Ovary (tissue), 10 donors: ENCODE measurements at regions of chr1 and their contacts with region 1.

Region 1: DNA sequence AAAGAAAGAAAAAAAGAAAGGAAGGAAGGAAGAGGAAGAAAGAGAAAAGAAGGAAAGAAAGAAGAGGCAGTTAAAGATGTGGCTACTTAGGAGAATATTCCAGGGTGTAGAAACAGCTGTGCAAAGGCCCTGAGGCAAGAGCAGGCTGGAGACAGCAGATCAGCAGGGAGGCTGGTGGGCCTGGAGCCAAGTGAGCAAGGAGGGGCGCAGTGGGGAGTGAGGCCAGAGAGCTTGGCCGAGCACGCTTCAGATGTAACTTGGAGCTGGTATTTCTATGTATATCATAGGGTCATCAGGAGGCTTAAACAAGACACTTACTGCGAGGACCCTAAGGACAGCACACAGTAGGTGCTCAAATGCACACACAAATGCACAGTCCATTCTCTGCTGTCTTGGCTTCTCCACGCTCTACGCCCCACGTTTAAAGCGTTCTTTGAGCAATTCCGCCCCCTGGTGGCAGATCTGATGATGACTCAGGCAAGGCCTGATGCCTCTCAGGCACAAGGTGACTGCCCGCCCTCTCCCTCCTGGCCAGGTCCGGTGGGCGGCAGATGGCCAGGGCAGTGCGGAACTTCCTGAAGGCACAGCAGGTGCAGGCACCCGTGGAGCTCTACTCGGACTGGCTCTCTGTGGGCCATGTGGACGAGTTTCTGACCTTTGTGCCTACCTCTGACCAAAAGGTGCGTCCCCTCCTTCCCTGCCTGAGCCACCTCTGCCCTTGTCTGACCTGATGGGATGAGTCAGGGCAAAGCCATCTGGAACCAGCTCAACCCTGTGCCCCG is 11.9 kb upstream of the PADI3 start:
- DNase-seq: peak; percentile 75 to 90 (median 86)
- H3K4me3 ChIP-seq: no peak overlapping the region
- H3K27ac ChIP-seq: no peak overlapping the region
- H3K4me1 ChIP-seq: no peaks in the 10 kb centered on the region
- H3K27me3 ChIP-seq: no peaks in the 10 kb centered on the region
- CTCF ChIP-seq: peak; percentile 76 to 80 (median 78)
- EP300 ChIP-seq: no peak
- POLR2A ChIP-seq: no peak

Region 2: DNA sequence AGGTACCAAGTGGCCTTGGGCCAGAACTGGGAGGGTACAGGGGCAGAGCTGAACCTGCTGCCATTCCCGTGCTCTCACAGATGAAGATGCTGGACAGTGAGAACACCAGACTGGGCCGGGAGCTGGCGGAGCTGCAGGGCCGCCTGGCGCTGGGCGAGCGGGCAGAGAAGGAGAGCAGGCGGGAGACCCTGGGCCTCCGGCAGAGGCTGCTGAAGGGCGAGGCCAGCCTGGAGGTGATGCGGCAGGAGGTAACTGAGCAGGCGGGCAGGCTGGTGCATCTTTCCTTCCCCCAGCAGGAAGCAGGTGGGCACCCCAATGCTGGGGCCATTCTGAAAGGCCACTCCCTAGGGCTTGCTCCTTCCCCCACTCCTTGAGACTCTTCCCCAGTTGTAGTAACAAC is 278.5 kb before region 1 on chr1:
- intact Hi-C with region 1: loop called in 1 of 4 experiments (anchors 10 kb)
- DNase-seq: no peak
- H3K4me3 ChIP-seq: no peak overlapping the region
- H3K27ac ChIP-seq: no peak overlapping the region
- H3K4me1 ChIP-seq: peaks cover 2% of the 10 kb centered on the region
- H3K27me3 ChIP-seq: no peaks in the 10 kb centered on the region
- CTCF ChIP-seq: no peak
- EP300 ChIP-seq: no peak
- POLR2A ChIP-seq: no peak

Region 3: DNA sequence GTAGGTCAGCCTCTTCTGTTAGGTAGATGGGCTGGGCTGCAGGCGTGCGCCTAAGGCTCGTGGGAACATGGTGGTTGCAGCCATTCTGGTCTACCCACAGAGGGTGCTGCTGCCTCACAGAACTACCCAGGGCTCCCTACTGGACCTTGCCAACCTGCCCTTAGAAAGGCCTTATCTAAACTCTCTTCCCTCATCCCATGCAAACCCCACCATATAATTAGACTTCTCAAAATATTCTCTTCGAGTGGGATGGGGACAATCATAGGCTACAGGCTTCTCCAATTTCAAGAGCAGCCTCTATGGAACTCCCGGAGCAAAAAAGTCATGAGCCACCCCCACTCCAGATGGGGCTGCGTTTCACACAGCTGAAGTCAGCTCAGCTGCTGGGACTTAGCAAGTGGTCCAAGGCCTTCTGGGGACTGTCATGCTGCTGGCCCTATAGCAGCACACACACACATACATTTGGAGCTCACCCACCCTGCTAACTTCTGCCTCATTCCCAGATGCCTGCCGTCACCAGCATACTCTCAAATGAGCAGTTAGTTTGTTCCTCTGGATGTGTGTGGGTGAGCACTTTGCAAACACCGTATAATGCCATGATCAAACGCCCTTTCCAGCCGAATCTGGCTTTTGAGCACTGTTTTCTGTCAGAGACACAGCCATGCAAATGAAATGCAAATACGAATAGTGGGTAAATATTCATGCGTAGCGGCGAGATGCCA is 177.1 kb before region 1 on chr1:
- intact Hi-C with region 1: loop called (anchors 5 to 10 kb)
- DNase-seq: peak; percentile 52 to 68 (median 59)
- H3K4me3 ChIP-seq: no peak overlapping the region
- H3K27ac ChIP-seq: no peak overlapping the region
- H3K4me1 ChIP-seq: no peaks in the 10 kb centered on the region
- H3K27me3 ChIP-seq: no peaks in the 10 kb centered on the region
- CTCF ChIP-seq: peak; percentile 29 to 47 (median 35)
- EP300 ChIP-seq: no peak
- POLR2A ChIP-seq: no peak

Region 4: GRCh38 chr1:17125756-17126237 is 111.2 kb before region 1 on chr1:
- intact Hi-C with region 1: loop called (anchors 2 to 10 kb)
- DNase-seq: peak; percentile 78 to 93 (median 89)
- H3K4me3 ChIP-seq: no peak overlapping the region
- H3K27ac ChIP-seq: no peak overlapping the region
- H3K4me1 ChIP-seq: no peaks in the 10 kb centered on the region
- H3K27me3 ChIP-seq: no peaks in the 10 kb centered on the region
- CTCF ChIP-seq: peak; percentile 68 to 93 (median 76)
- EP300 ChIP-seq: no peak
- POLR2A ChIP-seq: no peak

Region 5: GRCh38 chr1:17134034-17134433 is 102.9 kb before region 1 on chr1:
- intact Hi-C with region 1: loop called in 2 of 4 experiments (anchors 5 to 10 kb)
- DNase-seq: no peak
- H3K4me3 ChIP-seq: no peak overlapping the region
- H3K27ac ChIP-seq: no peak overlapping the region
- H3K4me1 ChIP-seq: no peaks in the 10 kb centered on the region
- H3K27me3 ChIP-seq: no peaks in the 10 kb centered on the region
- CTCF ChIP-seq: no peak
- EP300 ChIP-seq: no peak
- POLR2A ChIP-seq: no peak